Activated B cell treated with CpG ODN at 0.5 μM for 24 hours (primary cell): ENCODE measurements at regions of chr2 and their contacts with region 1.

Region 1: DNA sequence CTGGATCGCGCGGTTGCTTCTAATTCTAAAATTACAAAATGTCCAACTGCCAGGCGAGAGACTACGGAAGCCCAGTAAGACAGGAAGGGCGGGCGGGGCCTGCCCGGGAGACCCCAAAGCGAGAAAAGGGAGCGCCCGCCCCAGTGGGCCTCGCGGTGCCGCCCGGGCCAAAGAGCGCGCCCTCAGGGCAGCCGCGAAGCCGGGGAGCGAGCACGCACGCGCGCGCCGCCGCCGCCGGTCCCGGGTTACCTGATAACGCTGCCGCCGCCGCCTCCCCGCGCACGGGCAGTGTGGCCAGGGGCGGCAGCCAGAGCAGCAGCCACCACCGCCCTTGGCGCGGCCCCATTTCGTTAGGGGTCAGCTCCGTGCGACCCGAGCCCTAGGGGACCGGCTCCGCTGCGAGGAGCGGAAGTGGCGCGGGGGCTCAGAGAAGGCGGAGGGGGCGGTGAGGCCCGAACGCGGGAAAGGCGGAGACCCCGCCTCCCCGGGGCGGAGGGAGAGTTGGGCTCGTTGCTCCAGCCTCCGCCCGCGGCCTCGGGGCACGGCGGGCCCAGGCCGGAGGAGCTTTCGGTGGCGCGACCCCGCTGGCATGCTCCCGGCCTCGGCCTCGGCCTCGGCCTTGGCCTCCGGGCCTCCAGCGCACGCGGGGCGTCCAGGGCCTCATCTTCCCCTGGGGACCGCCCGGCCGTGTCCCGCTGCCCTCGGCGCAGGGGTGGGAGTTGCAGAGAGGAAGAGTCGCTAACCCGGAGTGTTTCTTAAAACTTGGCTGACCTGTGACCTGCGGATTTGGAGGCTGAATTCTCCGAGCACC is at the start of gene NEMP2:
- DNase-seq: peak; percentile 90
- ATAC-seq: peak; percentile 80
- H3K4me3 Mint-ChIP-seq: peak within 1 kb of the TSS; percentile 97
- H3K27ac Mint-ChIP-seq: peak within 1 kb of the TSS; percentile 100
- H3K4me1 Mint-ChIP-seq: peaks cover 56% of the 10 kb centered on the region
- H3K27me3 Mint-ChIP-seq: no peaks in the 10 kb centered on the region
- CTCF ChIP-seq: no peak
- total RNA-seq, gene NEMP2: 14.2 and 15.6 TPM in 2 replicates

Region 2: GRCh38 chr2:189440947-189441708 is 1093.4 kb before region 1 on chr2 and contains the start of gene WDR75:
- CTCF ChIA-PET with region 1: no interaction called
- POLR2A ChIA-PET with region 1: no interaction called
- intact Hi-C with region 1: loop called (anchors 1 kb)
- DNase-seq: peak; percentile 79
- ATAC-seq: peak; percentile 94
- H3K4me3 Mint-ChIP-seq: peak within 1 kb of the TSS; percentile 98
- H3K27ac Mint-ChIP-seq: peak within 1 kb of the TSS; percentile 99
- H3K4me1 Mint-ChIP-seq: peaks cover 26% of the 10 kb centered on the region
- H3K27me3 Mint-ChIP-seq: no peaks in the 10 kb centered on the region
- CTCF ChIP-seq: no peak
- total RNA-seq, gene WDR75: 53.0 and 61.2 TPM in 2 replicates

Region 3: DNA sequence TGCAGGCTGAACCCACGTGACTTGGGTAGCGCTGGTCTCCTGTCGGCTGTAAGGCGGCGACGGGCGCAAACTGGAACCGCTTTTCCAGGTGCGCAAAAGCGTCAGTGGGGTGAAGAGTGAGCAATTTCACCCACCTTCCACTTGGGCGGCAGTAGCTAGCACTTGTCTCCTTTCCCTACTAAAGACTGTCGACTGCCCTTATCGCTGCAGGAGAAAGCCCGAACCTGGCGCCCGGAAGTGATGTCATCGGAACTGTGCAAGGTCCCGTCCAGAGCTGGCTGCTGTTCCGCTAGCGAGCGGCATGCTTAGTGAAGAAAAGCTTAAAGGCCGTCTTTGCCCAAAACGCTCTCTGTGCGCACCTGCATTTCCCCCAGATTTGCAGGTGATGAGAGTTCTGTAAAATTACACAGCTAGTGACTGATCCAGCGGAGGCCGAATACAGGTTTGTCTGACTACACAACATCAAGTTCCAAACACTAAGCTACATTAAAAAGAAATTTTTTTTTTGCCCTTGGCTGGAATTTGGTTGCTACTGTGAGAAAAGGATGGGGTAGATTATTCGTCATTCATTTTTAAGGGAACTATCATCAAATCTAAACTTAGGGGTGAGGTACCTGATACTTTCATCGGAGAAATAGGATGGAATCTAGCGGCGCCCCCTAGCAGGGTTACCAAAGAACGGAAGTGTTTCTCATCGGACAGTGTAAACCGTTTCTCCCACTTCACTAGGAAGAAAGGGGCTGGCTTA is 771.8 kb before region 1 on chr2 and contains the start of gene OSGEPL1:
- CTCF ChIA-PET with region 1: no interaction called
- POLR2A ChIA-PET with region 1: interaction called, 4 read pairs
- intact Hi-C with region 1: loop called (anchors 1 kb)
- DNase-seq: peak; percentile 81
- ATAC-seq: peak; percentile 93
- H3K4me3 Mint-ChIP-seq: peak within 1 kb of the TSS; percentile 95
- H3K27ac Mint-ChIP-seq: peak within 1 kb of the TSS; percentile 97
- H3K4me1 Mint-ChIP-seq: peaks cover 8% of the 10 kb centered on the region
- H3K27me3 Mint-ChIP-seq: no peaks in the 10 kb centered on the region
- CTCF ChIP-seq: no peak
- total RNA-seq, gene OSGEPL1: 10.6 and 12.3 TPM in 2 replicates

Region 4: DNA sequence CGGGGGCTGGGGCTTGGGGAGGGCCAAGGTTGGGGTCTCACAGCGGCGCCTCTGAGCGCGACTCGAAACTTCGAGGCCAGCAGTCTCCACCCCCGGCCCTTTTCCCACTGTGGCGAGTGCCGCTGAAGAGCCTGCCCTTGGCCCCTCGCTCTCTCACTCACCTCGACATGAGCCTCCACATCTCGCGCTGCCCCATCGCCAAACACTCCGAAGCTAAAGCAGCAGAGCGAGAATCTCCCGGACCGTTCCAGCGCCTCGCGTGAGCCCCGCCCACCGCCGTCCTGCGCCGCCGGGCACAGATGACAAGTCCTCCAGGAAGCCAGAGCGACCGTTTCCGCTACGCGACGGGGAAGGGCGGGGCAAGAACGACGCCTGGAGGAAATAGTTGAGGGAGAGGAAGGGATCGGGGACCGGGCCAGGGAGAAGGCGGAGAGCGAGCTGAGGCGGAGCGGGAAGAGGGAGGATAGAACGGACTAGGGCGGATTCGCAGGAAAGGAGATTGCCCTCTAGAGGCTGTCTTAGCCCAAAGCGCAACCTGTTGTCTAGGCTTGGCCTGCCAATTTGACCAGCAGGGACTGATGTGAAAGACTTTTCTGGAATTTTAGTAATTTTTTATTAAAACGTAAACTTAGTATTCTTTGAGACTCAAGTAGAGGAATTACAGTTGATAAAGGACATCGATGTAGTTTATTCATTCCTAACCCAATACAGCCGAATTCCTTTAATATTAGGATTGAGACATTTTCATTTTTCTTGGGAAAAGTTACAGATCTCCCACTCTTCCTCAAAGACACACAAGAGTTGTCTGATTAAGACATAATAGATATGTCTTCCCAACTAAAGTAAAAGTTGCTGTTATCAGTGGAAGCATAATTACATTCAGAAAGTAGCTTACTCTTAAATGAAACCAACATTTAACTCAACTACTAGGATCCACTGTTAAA is 214.7 kb before region 1 on chr2 and contains the start of gene HIBCH:
- CTCF ChIA-PET with region 1: no interaction called
- POLR2A ChIA-PET with region 1: no interaction called
- intact Hi-C with region 1: loop called (anchors 2 kb)
- DNase-seq: peak; percentile 82
- ATAC-seq: peak; percentile 94
- H3K4me3 Mint-ChIP-seq: peak within 1 kb of the TSS; percentile 96
- H3K27ac Mint-ChIP-seq: peak within 1 kb of the TSS; percentile 94
- H3K4me1 Mint-ChIP-seq: peaks cover 46% of the 10 kb centered on the region
- H3K27me3 Mint-ChIP-seq: peaks cover 2% of the 10 kb centered on the region
- CTCF ChIP-seq: no peak
- total RNA-seq, gene HIBCH: 16.3 and 21.2 TPM in 2 replicates

Region 5: DNA sequence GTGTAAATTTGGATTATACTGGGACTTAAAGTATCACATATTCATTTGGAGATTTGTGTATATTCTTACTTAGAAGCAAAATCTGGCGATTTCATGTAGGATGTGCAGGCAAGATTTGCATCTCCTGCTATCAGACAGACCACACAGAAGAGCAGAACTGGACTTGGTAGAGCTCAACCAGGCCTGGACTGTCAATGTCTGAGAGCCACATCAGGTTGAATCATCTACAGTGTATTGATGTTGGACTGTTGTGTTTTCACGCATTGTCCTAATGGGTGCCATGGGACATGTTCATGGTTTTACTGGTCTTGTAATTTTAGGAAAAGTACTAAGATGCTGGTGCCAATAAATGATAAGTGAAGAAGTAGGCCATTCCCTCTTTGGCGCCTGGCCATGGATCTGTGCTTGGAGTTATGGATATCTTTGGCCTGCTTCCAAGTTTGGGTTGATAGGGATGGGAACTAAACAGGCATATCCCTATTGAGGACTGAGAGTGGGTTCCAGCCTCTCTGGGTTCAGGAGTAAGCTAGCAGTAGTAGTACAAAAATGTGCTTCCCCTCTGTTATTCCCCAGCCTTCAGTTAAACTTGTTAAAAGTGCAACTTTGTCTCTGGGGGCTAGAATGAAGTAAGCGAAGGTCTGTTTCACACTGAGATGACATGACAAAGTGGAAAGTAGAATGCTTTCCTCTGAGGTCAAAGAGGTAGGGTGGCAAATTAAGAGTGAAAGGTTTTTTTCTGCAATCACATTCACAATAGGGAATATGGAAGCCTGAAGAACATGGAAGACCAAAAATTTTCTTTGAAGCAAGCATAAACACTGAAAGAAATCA is 49.2 kb after region 1 on chr2:
- CTCF ChIA-PET with region 1: no interaction called
- POLR2A ChIA-PET with region 1: interaction called, 38 read pairs
- intact Hi-C with region 1: loop called (anchors 1 kb)
- DNase-seq: no peak
- ATAC-seq: peak; percentile 72
- H3K4me3 Mint-ChIP-seq: peak overlapping the region; percentile 62
- H3K27ac Mint-ChIP-seq: peak overlapping the region; percentile 83
- H3K4me1 Mint-ChIP-seq: peaks cover 30% of the 10 kb centered on the region
- H3K27me3 Mint-ChIP-seq: no peaks in the 10 kb centered on the region
- CTCF ChIP-seq: no peak

Region 6: DNA sequence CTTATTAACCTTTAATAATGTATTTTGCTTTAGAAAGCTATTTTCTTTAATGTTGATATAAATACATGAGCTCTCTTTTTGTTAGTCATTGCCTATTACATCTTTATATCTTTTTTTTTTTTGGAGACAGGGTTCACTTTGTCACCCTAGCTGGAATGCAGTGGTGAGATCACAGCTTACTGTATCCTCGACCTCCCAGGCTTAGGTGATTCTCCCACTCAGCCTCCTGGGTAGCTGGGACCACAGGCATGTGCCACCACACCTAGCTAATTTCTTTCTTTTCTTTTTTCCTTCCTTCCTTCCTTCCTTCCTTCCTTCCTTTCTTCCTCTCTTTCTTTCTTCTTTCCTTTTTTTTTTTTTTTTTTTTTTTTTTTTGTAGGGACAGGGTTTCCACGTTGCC is 129.7 kb after region 1 on chr2:
- CTCF ChIA-PET with region 1: no interaction called
- POLR2A ChIA-PET with region 1: no interaction called
- intact Hi-C with region 1: no loop called
- DNase-seq: no peak
- ATAC-seq: no peak
- H3K4me3 Mint-ChIP-seq: no peak overlapping the region
- H3K27ac Mint-ChIP-seq: no peak overlapping the region
- H3K4me1 Mint-ChIP-seq: peaks cover 2% of the 10 kb centered on the region
- H3K27me3 Mint-ChIP-seq: no peaks in the 10 kb centered on the region
- CTCF ChIP-seq: no peak

Region 7: DNA sequence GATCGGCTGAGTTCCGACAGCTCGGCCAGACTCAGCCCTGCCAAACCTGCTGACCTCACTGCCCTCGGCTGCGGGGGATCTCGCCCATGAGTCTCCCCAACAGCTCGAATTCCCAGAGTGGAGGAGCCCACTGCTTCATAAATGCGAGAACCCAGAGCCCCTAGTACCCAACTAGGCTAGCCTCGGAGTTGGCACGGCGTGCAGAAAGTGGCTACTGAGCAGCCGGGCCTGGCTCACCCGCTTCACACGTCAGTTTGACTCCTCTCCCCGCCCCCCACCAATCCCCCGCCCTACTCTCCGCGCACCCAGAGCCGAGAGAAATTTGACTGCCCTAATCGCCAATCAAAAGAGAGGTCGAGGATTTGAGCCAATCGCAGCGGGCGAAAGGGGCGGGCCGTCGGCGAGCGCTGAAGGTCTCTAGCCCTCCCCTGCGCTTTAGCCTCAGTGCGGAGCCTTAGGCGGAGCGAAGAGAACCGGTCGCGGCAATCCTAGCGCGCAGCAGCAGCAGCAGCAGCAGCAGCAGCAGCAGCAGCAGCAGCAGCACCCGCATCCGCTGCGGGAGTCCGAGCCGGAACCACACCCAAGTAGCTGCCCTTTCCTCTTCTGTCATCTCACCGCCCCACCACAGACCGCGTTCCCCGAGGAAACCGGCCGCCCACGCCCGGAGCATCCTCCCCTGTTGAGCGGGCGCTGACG is 346.0 kb after region 1 on chr2 and contains the start of gene GLS:
- CTCF ChIA-PET with region 1: no interaction called
- POLR2A ChIA-PET with region 1: interaction called, 13 read pairs
- intact Hi-C with region 1: loop called (anchors 2 kb)
- DNase-seq: peak; percentile 90
- ATAC-seq: peak; percentile 82
- H3K4me3 Mint-ChIP-seq: peak within 1 kb of the TSS; percentile 97
- H3K27ac Mint-ChIP-seq: peak within 1 kb of the TSS; percentile 97
- H3K4me1 Mint-ChIP-seq: peaks cover 44% of the 10 kb centered on the region
- H3K27me3 Mint-ChIP-seq: no peaks in the 10 kb centered on the region
- CTCF ChIP-seq: no peak
- total RNA-seq, gene GLS: 212 and 255 TPM in 2 replicates

Region 8: DNA sequence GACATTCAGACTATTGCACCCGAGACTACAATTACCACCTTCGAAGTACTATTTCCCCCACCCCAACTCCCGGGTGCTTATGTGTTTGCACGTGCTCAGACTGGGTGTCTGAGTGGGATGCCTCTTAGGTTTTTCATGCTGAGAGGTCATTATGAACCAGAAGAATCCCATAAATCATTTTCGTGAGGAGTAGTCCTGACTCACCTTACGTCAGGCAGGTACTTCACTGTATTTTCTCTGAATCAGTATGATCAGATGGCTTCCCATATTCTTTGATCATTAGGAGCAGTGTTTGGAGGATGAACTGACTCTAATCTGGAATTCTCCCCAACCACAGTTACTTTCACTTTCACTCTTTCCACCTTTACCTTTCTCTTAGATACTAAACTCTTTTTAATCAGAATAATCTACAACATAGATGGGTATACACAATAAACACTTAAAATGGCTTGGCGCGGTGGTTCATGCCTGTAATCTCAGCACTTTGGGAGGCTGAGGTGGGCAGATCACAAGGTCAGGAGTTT is 654.7 kb after region 1 on chr2:
- CTCF ChIA-PET with region 1: no interaction called
- POLR2A ChIA-PET with region 1: no interaction called
- intact Hi-C with region 1: no loop called
- DNase-seq: no peak
- ATAC-seq: no peak
- H3K4me3 Mint-ChIP-seq: no peak overlapping the region
- H3K27ac Mint-ChIP-seq: no peak overlapping the region
- H3K4me1 Mint-ChIP-seq: peaks cover 8% of the 10 kb centered on the region
- H3K27me3 Mint-ChIP-seq: peaks cover 2% of the 10 kb centered on the region
- CTCF ChIP-seq: no peak